ENCODE measurements at regions of chr1 and their contacts with region 1.

Region 1: DNA sequence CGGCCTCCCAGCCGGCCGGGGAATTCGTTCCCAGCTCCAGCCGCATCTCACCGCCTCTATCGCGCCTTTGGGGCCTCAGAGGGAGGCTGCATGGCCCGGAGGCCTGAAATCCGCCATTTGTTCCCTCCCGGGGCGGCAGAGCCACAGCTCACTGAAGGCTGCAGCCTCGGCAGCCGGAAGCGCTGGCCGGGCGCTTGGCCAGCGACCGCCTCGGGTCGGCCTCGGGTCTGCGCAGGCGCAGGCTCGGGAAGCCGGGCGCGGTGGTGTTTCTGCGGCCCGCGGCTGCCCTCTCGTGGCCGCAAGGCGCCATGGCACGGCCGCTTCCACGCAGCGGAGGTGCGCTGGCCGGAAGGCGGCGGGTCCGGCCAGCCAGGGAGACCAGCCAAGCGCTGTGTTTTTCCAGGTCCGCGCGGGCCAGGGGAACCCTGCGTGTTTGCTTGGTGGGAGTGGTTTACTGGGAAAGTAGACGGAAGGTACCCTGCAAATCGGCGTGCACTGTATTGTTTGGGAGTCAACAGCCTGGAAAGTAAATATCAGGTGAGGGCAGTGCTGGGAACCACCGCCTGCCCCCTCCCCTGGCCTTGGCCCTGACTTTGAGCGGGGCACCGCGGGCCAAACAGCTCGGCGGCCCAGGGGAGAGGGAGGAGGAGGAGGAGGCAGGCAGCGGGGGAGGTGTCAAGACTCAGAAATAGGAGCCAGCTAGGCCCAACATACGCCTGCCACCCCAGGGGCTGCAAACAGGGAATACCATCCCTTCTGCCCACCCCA is 52.7 kb upstream of the CD34 start:
- DNase-seq: peak; percentile 86 to 94
- H3K4me3 ChIP-seq: peak overlapping the region; percentile 61 to 71
- H3K27ac ChIP-seq: peak overlapping the region; percentile 90 to 96
- H3K4me1 ChIP-seq: peaks cover 0 to 41% (median 31%) of the 10 kb centered on the region in 4 donors
- H3K27me3 ChIP-seq: no peaks in the 10 kb centered on the region
- CTCF ChIP-seq: peak; percentile 99 to 100

Region 2: DNA sequence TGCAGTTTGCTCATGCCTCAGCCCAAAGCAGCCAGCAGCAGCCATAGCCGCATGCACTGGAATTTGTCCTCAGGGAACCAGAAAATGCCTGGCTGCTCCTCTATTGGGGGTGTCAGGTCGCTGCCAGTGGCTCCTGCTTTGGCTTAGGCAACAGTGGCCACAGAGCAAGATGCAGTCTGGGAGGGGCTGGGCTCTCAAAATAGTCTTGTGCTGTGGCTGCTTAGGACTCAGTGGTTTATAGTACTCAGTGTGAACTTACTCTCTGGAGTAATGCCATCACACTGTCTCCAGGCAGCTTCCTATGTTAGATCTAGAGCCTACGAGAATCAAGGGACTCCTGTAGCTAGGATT is 617.1 kb before region 1 on chr1:
- intact Hi-C with region 1: no loop called
- DNase-seq: no peak
- H3K4me3 ChIP-seq: no peak overlapping the region
- H3K27ac ChIP-seq: no peak overlapping the region
- H3K4me1 ChIP-seq: peaks cover 0 to 15% (median 5%) of the 10 kb centered on the region in 4 donors
- H3K27me3 ChIP-seq: no peaks in the 10 kb centered on the region
- CTCF ChIP-seq: no peak

Region 3: DNA sequence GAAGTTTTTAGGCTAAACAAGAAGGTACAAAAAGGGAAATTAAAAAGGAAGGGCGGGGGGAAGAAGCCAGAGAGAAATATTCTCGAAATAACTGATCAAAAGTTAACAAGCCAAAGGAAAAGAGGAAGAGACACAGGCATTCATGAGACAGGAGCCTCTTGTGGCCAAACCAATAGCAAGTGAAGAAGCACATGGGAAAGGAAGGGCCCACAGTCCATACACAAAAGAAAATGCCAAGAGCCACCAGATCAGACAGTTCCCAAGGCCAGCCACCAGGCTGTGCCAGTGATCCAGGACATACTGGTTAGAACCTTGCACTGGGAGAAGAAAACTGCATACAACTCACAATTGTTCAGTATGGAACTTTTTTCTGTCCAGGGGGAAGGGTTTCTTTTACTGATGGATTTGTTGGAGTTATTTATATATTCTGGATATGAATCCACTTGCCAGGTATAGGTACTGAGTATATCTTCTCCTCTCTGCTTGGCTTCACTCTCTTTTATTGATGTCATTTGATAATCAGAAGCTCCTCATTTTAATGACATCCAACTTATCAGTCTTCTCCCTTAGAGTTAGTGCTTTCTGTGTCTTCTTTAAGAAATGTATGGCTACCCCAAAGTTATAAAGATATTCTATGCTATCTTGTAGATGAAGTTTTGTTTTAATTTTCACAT is 135.0 kb before region 1 on chr1:
- intact Hi-C with region 1: loop called (anchors 5 kb)
- DNase-seq: peak; percentile 86 to 89
- H3K4me3 ChIP-seq: no peak overlapping the region
- H3K27ac ChIP-seq: peak overlapping the region; percentile 13 to 100
- H3K4me1 ChIP-seq: peaks cover 0 to 92% (median 65%) of the 10 kb centered on the region in 4 donors
- H3K27me3 ChIP-seq: no peaks in the 10 kb centered on the region
- CTCF ChIP-seq: peak; percentile 89 to 92

Region 4: GRCh38 chr1:207885129-207886032 is 78.2 kb before region 1 on chr1:
- intact Hi-C with region 1: loop called (anchors 2 kb)
- DNase-seq: peak; percentile 87 to 90
- H3K4me3 ChIP-seq: no peak overlapping the region
- H3K27ac ChIP-seq: peak overlapping the region in 1 of 2 donors; percentile 40
- H3K4me1 ChIP-seq: peaks cover 4 to 39% (median 29%) of the 10 kb centered on the region in 4 donors
- H3K27me3 ChIP-seq: no peaks in the 10 kb centered on the region
- CTCF ChIP-seq: peak; percentile 95 to 97

Measured in tibial artery (tissue), 4 donors.